Cardiac septum (tissue), 1 donor: ENCODE measurements at regions of chr11 and their contacts with region 1.

Region 1: DNA sequence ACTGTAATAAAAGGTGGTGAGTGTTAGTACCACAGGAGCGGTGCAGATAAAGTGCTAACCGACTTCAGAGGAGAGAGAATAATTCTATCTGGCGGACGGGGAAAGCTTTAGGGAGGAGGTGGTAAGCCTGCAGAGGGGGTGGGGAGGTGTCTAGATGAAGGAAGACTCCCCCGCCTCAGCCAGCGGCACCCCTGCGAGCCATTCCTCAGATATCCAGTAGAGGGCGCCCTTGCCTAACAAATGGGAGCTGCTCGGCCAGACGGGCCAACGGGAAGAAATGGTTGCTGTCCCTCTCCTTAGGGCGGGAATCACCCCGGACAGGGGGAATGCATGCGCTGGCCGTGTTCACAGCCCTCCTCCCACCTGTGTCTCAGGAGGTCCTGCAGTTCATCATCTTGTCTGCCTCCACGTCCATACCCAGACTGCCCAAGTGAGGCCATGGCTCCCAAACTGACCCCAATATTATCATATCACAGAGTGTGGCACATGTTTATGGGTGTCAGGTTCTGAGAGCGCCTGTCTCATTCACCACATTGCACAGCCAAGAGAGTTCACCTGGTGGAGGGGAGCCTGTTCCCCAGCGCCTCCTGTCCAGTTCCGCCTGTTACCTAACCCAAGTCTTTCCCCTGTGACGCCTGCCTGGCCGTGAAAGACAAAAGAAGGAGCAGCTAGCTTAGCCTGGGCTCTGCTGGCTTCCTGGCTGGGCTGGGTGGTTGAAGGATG is 85.5 kb downstream of the ST3GAL4 start:
- DNase-seq: peak; percentile 88

Region 2: GRCh38 chr11:125376117-125376516 is 1064.8 kb before region 1 on chr11:
- intact Hi-C with region 1: no loop called
- DNase-seq: peak; percentile 87

Region 3: GRCh38 chr11:126172596-126173038 is 268.3 kb before region 1 on chr11:
- intact Hi-C with region 1: no loop called
- DNase-seq: no peak

Region 4: GRCh38 chr11:126310228-126310991 is 130.5 kb before region 1 on chr11:
- intact Hi-C with region 1: loop called (anchors 2 kb)
- DNase-seq: peak; percentile 85

Region 5: GRCh38 chr11:126391970-126392639 is 48.8 kb before region 1 on chr11:
- intact Hi-C with region 1: loop called (anchors 2 kb)
- DNase-seq: peak; percentile 74

Region 6: DNA sequence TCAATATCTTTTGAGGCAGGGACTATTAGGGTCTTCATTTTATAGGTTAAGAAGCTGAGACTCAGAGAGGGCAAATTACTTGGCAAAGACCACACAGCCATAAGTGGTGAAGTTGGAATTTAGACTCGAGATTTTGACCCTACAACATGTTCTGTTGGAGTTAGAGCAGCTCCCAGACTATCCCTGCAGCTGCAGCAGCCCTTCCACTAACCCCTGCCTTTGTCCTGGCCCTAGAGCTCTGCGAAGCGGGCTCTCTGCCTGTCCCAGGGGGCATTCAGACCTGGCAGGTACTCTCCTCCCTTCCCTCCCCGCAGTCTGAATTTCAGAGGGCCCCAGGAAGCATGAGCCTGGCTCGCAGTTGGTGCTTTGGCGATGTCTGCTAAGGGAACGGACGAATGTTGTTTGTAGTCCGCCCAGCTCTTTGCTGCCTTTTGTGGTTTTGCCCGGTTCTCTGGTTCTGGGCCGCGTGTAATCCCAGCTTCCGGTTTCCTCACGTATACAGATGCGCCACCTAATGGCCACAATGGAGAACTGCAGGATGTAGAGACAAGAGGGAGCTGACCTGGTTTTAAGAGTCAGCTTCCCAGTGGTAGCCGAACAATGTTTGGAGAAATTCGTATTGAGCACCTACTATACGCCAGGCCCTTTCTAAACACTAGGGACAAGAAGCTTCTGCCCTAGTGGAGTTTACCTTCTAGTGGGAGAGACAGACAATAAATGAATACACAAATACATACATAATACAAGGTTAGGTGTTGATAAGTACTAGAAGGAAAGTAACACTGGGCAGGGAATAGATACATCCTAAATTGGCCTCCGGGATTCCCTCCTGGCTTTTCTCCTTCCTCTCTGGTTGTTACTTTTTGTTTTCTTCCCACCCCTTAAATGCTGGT is 39.7 kb after region 1 on chr11:
- intact Hi-C with region 1: loop called (anchors 1 kb)
- DNase-seq: peak; percentile 88

Region 7: GRCh38 chr11:126989942-126990715 is 549.2 kb after region 1 on chr11:
- intact Hi-C with region 1: loop called (anchors 2 kb)
- DNase-seq: peak; percentile 78

Region 8: GRCh38 chr11:127345819-127346459 is 905.0 kb after region 1 on chr11:
- intact Hi-C with region 1: loop called (anchors 2 kb)
- DNase-seq: no peak